CD14-positive monocyte (primary cell): ENCODE measurements at regions of chr1 and their contacts with region 1.

Region 1: GRCh38 chr1:25392841-25393240 is 27.8 kb downstream of the RHCE start:
- DNase-seq: peak in 1 of 3 donors; percentile 20
- H3K4me3 ChIP-seq: no peak overlapping the region
- H3K4me3 Mint-ChIP-seq: no peak overlapping the region
- H3K27ac ChIP-seq: no peak overlapping the region
- H3K27ac Mint-ChIP-seq: peak overlapping the region in 2 of 7 donors; percentile 55 to 68
- H3K4me1 ChIP-seq: no peaks in the 10 kb centered on the region
- H3K4me1 Mint-ChIP-seq: peaks cover 9% of the 10 kb centered on the region
- H3K27me3 ChIP-seq: no peaks in the 10 kb centered on the region
- H3K27me3 Mint-ChIP-seq: peaks cover 0 to 1% (median 0%) of the 10 kb centered on the region in 3 donors
- CTCF ChIP-seq: no peak

Region 2: GRCh38 chr1:25487628-25488027 is 94.8 kb after region 1 on chr1:
- intact Hi-C with region 1: loop called in 1 of 2 experiments (anchors 10 kb)
- DNase-seq: peak in 2 of 3 donors; percentile 11 to 12
- H3K4me3 ChIP-seq: no peak overlapping the region
- H3K4me3 Mint-ChIP-seq: no peak overlapping the region
- H3K27ac ChIP-seq: no peak overlapping the region
- H3K27ac Mint-ChIP-seq: peak overlapping the region in 1 of 7 donors; percentile 22
- H3K4me1 ChIP-seq: no peaks in the 10 kb centered on the region
- H3K4me1 Mint-ChIP-seq: peaks cover 8% of the 10 kb centered on the region
- H3K27me3 ChIP-seq: no peaks in the 10 kb centered on the region
- H3K27me3 Mint-ChIP-seq: no peaks in the 10 kb centered on the region
- CTCF ChIP-seq: peak; percentile 78